Activated T-helper 1 cell treated with anti-CD3 and anti-CD28 coated beads, Interleukin-12 subunit alpha, Interleukin-12 subunit beta, Interleukin-2, Interleukin-4 antibody, amounts not matched to agents 30 ng/mL and 10 ng/mL and 1 ng/mL, durations not matched to agents 14 hours and 24 hours and 36 hours (primary cell): ENCODE measurements at regions of chr6 and their contacts with region 1.

Region 1: DNA sequence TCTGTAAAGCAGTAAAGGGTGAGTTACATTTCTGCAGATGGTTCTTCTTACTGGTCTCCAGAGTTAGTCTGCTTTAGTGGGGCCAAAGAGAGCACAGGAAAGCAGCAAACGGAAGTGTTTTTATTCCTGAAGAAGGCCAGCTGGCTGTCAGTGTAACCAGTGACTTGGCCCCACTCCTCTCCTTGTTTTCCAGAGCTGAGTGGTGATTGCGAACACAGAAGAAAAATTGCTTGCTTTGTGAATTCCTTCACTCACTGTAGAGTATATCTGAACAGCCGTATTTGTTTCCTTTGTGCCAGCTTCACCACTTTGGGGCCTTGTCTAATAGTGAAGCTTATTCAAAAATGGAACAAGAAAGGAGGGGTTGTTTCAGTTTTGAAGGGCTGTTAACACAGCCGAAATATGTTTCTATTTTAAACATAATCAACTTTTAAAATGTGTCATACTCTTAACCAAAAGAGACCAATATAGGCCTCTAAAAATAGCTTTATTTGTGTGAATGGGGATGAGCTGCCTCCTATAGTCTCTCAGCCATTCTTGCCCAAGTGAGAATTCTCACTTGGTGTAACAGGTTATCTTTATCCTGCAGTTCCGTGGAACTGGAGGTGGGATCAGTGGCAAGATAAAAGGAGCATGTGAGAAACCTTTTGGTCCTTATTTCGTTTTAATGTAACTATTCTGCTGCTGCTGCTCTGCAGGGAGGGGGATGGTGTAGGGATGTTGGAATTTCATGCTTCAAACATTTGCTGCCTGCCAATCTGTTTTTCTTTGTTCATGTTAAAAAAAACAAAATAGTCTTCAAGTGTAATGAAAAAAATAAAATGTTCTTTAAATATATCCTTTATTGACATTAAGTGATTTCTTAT is 37.8 kb downstream of the ZC2HC1B start:
- DNase-seq: no peak
- H3K4me3 Mint-ChIP-seq: no peak overlapping the region
- H3K27ac Mint-ChIP-seq: no peak overlapping the region
- H3K4me1 Mint-ChIP-seq: peaks cover 8% of the 10 kb centered on the region
- H3K27me3 Mint-ChIP-seq: no peaks in the 10 kb centered on the region

Region 2: DNA sequence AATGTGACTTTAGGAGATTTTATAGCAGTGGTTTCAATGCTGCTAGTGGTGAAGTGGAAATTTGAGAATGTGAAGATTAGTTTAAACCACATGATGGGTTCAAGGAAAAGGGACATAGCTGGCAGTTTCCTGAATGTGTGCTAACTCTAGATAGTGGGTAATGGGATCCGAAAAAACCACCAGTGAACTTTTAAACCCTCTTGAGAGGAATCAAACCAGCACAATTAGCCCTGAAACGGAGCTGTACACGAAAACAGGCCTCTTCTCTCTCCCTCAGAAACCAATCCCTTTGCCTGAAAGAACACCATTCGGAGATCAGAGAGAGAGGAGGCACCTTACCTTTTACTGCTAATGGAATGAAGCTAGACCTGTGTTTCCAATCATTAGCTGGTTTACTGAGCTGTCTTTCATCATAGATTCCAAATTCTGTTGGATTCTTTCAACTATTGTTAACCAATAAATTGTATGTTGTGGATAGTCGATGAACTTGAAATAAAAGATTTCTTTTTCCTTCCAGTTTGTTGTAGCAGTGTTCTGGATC is 737.5 kb before region 1 on chr6:
- intact Hi-C with region 1: loop called (anchors 5 kb)
- DNase-seq: no peak
- H3K4me3 Mint-ChIP-seq: no peak overlapping the region
- H3K27ac Mint-ChIP-seq: no peak overlapping the region
- H3K4me1 Mint-ChIP-seq: no peaks in the 10 kb centered on the region
- H3K27me3 Mint-ChIP-seq: peaks cover 2% of the 10 kb centered on the region